ENCODE measurements at regions of chr3 and their contacts with region 1.

Region 1: GRCh38 chr3:171829841-171830517 is 13.2 kb upstream of the TMEM212 start:
- DNase-seq: peak; percentile 80 to 81
- H3K4me3 ChIP-seq: no peak overlapping the region
- H3K4me3 Mint-ChIP-seq: no peak overlapping the region
- H3K27ac Mint-ChIP-seq: no peak overlapping the region
- H3K4me1 ChIP-seq: peaks cover 12% of the 10 kb centered on the region; the same call in 1 of the 2 replicates
- H3K4me1 Mint-ChIP-seq: peaks cover 5% of the 10 kb centered on the region
- H3K27me3 ChIP-seq: no peaks in the 10 kb centered on the region
- H3K27me3 Mint-ChIP-seq: no peaks in the 10 kb centered on the region
- CTCF ChIP-seq: peak; percentile 64 to 87

Region 2: GRCh38 chr3:171646357-171647133 is 183.4 kb before region 1 on chr3:
- CTCF ChIA-PET with region 1: interaction called, 7 read pairs
- POLR2A ChIA-PET with region 1: no interaction called
- intact Hi-C with region 1: loop called (anchors 1 kb)
- DNase-seq: peak in 1 of 2 experiments; percentile 21
- H3K4me3 ChIP-seq: no peak overlapping the region
- H3K4me3 Mint-ChIP-seq: no peak overlapping the region
- H3K27ac Mint-ChIP-seq: no peak overlapping the region
- H3K4me1 ChIP-seq: no peaks in the 10 kb centered on the region
- H3K4me1 Mint-ChIP-seq: no peaks in the 10 kb centered on the region
- H3K27me3 ChIP-seq: no peaks in the 10 kb centered on the region
- H3K27me3 Mint-ChIP-seq: no peaks in the 10 kb centered on the region
- CTCF ChIP-seq: peak; percentile 55 to 66

Region 3: GRCh38 chr3:171703756-171704401 is 126.1 kb before region 1 on chr3:
- CTCF ChIA-PET with region 1: no interaction called
- POLR2A ChIA-PET with region 1: no interaction called
- intact Hi-C with region 1: loop called (anchors 1 kb)
- DNase-seq: peak in 1 of 2 experiments; percentile 42
- H3K4me3 ChIP-seq: no peak overlapping the region
- H3K4me3 Mint-ChIP-seq: no peak overlapping the region
- H3K27ac Mint-ChIP-seq: no peak overlapping the region
- H3K4me1 ChIP-seq: no peaks in the 10 kb centered on the region
- H3K4me1 Mint-ChIP-seq: no peaks in the 10 kb centered on the region
- H3K27me3 ChIP-seq: no peaks in the 10 kb centered on the region
- H3K27me3 Mint-ChIP-seq: no peaks in the 10 kb centered on the region
- CTCF ChIP-seq: peak in 1 of 2 experiments; percentile 61

Region 4: GRCh38 chr3:171772427-171773056 is 57.4 kb before region 1 on chr3:
- CTCF ChIA-PET with region 1: interaction called, 22 read pairs
- POLR2A ChIA-PET with region 1: no interaction called
- intact Hi-C with region 1: loop called (anchors 1 kb)
- DNase-seq: peak; percentile 57 to 64
- H3K4me3 ChIP-seq: no peak overlapping the region
- H3K4me3 Mint-ChIP-seq: no peak overlapping the region
- H3K27ac Mint-ChIP-seq: no peak overlapping the region
- H3K4me1 ChIP-seq: no peaks in the 10 kb centered on the region
- H3K4me1 Mint-ChIP-seq: peaks cover 9% of the 10 kb centered on the region
- H3K27me3 ChIP-seq: no peaks in the 10 kb centered on the region
- H3K27me3 Mint-ChIP-seq: no peaks in the 10 kb centered on the region
- CTCF ChIP-seq: peak; percentile 66 to 74

Region 5: DNA sequence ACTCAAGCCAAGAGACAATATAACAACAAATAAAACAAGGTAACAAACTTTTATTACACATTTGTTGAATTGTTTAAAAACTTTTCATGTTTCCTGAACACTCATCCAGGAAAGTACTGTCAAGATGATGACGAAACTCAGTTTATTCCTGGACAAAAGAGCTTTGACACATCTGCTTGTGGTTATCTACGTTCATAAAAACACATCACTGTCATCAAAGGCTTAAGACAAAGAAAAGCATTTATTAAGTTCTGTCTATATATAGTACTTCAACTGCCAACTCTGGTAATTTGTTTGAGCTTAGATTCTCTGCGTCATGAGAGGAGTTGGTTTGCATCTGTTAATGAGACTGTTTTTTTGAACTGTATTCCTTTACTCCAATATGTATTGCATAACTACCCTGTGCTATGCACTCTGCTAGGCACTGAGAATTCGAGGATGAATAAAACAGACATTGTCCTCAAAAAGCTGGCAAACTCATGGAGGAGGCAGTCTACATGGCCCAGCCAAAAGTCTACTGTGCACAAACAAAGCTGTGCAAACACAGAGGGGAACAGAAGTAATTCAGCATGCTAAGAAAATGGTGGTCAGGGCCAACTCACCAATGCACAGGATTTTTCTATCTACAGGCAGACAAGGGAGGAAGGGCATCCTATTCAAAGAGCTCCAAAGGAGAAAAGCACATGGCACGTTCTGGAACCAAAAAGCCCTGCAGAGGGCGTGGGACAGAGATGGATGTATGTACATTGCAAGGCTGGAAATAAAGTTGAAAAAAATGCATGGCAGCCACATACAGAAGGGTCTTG is 41.2 kb before region 1 on chr3:
- CTCF ChIA-PET with region 1: interaction called, 10 read pairs
- POLR2A ChIA-PET with region 1: no interaction called
- intact Hi-C with region 1: loop called (anchors 1 kb)
- DNase-seq: peak in 1 of 2 experiments; percentile 14
- H3K4me3 ChIP-seq: no peak overlapping the region
- H3K4me3 Mint-ChIP-seq: no peak overlapping the region
- H3K27ac Mint-ChIP-seq: no peak overlapping the region
- H3K4me1 ChIP-seq: peaks cover 8% of the 10 kb centered on the region; the same call in 1 of the 2 replicates
- H3K4me1 Mint-ChIP-seq: peaks cover 14% of the 10 kb centered on the region
- H3K27me3 ChIP-seq: no peaks in the 10 kb centered on the region
- H3K27me3 Mint-ChIP-seq: no peaks in the 10 kb centered on the region
- CTCF ChIP-seq: peak in 1 of 2 experiments; percentile 11

Region 6: GRCh38 chr3:171809821-171810628 is 20.0 kb before region 1 on chr3 and contains the start of gene PLD1:
- CTCF ChIA-PET with region 1: interaction called, 5 read pairs
- POLR2A ChIA-PET with region 1: interaction called, 7 read pairs
- intact Hi-C with region 1: loop called (anchors 1 kb)
- DNase-seq: peak; percentile 87 to 88
- H3K4me3 ChIP-seq: peak within 1 kb of the TSS; percentile 90
- H3K4me3 Mint-ChIP-seq: peak within 1 kb of the TSS; percentile 87
- H3K27ac Mint-ChIP-seq: peak within 1 kb of the TSS; percentile 83
- H3K4me1 ChIP-seq: peaks cover 37% of the 10 kb centered on the region
- H3K4me1 Mint-ChIP-seq: peaks cover 28% of the 10 kb centered on the region
- H3K27me3 ChIP-seq: no peaks in the 10 kb centered on the region
- H3K27me3 Mint-ChIP-seq: no peaks in the 10 kb centered on the region
- CTCF ChIP-seq: no peak
- total RNA-seq, gene PLD1: 5.3 and 5.5 TPM in 2 replicates

Region 7: DNA sequence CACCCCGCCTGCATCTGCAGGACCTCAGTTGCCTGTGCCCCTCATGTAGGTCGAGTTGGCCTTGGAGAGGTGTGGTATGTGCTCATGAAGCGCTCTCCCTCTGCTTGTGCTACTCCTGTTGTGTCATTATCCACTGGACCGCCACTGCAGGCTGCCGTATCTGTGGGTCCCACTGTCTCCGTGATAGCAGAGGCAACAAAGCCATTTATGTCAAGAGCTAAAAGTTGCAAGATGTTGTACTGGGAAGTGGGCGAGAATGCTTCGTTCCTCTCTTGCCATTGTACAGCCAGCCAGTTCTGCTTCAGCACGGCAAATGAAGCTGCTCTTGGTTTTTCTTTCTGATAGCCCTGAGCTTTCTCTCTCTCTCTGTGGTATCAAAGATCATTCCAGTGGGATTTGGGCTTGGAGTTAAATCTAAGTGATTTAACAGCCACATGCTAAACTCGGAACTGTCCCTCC is 102.2 kb after region 1 on chr3:
- CTCF ChIA-PET with region 1: no interaction called
- POLR2A ChIA-PET with region 1: no interaction called
- intact Hi-C with region 1: no loop called
- DNase-seq: no peak
- H3K4me3 ChIP-seq: no peak overlapping the region
- H3K4me3 Mint-ChIP-seq: no peak overlapping the region
- H3K27ac Mint-ChIP-seq: no peak overlapping the region
- H3K4me1 ChIP-seq: peaks cover 14% of the 10 kb centered on the region
- H3K4me1 Mint-ChIP-seq: peaks cover 14% of the 10 kb centered on the region
- H3K27me3 ChIP-seq: no peaks in the 10 kb centered on the region
- H3K27me3 Mint-ChIP-seq: no peaks in the 10 kb centered on the region
- CTCF ChIP-seq: no peak

Region 8: GRCh38 chr3:172341482-172342059 is 511.6 kb after region 1 on chr3:
- CTCF ChIA-PET with region 1: interaction called, 3 read pairs
- POLR2A ChIA-PET with region 1: no interaction called
- intact Hi-C with region 1: loop called (anchors 1 kb)
- DNase-seq: peak in 1 of 2 experiments; percentile 57
- H3K4me3 ChIP-seq: no peak overlapping the region
- H3K4me3 Mint-ChIP-seq: no peak overlapping the region
- H3K27ac Mint-ChIP-seq: no peak overlapping the region
- H3K4me1 ChIP-seq: no peaks in the 10 kb centered on the region
- H3K4me1 Mint-ChIP-seq: no peaks in the 10 kb centered on the region
- H3K27me3 ChIP-seq: no peaks in the 10 kb centered on the region
- H3K27me3 Mint-ChIP-seq: no peaks in the 10 kb centered on the region
- CTCF ChIP-seq: peak; percentile 49 to 54

Measured in Caco-2 (cell line).